ENCODE measurements at regions of chr1 and their contacts with region 1.

Region 1: GRCh38 chr1:165129568-165130164 is 226.8 kb downstream of the LMX1A start:
- DNase-seq: peak; percentile 81
- H3K4me3 Mint-ChIP-seq: no peak overlapping the region
- H3K27ac Mint-ChIP-seq: no peak overlapping the region
- H3K4me1 Mint-ChIP-seq: no peaks in the 10 kb centered on the region
- H3K27me3 Mint-ChIP-seq: peaks cover 68% of the 10 kb centered on the region
- CTCF ChIP-seq: peak; percentile 65

Region 2: GRCh38 chr1:165114022-165114888 is 15.4 kb before region 1 on chr1:
- CTCF ChIA-PET with region 1: interaction called, 10 read pairs
- intact Hi-C with region 1: no loop called
- DNase-seq: peak; percentile 70
- H3K4me3 Mint-ChIP-seq: no peak overlapping the region
- H3K27ac Mint-ChIP-seq: no peak overlapping the region
- H3K4me1 Mint-ChIP-seq: peaks cover 7% of the 10 kb centered on the region
- H3K27me3 Mint-ChIP-seq: peaks cover 63% of the 10 kb centered on the region
- CTCF ChIP-seq: peak; percentile 69

Region 3: DNA sequence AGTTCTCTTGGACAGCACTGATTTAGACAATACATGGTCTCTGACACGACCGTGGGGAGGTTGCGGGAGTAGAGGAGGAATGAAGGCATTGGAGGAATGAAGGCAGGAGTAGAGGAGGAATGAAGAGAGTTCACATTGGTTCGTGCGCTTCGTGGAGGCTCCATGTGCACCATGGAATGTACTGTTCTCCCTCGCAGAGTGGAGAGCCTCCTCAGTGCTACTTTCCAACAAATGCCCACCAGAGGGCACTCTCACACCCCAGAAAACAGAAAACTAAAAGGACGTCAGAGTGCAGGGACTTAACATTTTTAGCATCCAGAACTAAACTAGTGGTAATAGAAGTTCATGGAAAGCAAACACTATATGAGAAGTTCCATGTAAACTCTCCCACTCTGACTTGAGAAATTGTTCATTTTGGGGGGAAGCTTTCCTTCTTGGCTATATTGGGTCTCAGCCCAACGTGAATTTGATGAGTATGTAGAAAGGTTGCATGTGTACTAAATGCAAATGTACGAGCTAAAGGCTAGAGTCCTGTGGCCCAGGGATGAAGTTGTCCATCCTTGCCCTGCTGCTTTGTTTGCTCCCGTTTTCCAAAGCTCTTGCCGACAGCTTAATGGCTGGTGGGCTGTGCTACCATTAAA is 15.2 kb after region 1 on chr1:
- CTCF ChIA-PET with region 1: interaction called, 5 read pairs
- intact Hi-C with region 1: loop called (anchors 1 kb)
- DNase-seq: peak; percentile 73
- H3K4me3 Mint-ChIP-seq: no peak overlapping the region
- H3K27ac Mint-ChIP-seq: no peak overlapping the region
- H3K4me1 Mint-ChIP-seq: no peaks in the 10 kb centered on the region
- H3K27me3 Mint-ChIP-seq: peaks cover 37% of the 10 kb centered on the region
- CTCF ChIP-seq: peak; percentile 75

Region 4: DNA sequence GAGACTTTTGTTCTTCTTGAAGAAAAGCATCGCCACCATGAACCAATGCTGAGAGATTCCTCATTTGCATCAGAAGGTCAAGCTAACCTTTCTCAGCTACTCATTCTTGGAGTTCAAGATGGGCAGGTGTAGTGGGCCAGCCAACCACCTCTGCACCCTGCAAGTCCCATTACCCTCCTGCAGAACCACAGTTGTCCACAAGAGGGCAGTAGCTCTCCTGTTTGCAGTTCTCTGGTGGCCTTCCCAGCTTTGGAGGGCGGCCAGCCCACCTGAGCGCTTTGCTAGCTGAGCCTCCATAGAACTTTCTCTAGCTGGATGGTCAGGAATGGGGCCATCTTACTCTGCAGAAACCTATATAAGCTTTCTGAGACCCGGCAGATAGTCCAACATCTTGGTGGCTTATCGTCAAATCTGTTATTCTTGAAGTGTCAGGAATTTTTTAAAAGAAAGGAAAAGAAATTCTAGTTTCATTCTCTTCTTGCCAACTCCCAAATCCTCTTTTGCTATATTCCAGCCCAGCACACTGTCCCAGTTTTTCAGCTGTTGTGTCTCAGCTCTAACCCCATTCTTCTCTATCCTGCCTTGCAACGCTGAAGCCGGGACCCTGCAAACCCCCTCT is 237.8 kb after region 1 on chr1:
- CTCF ChIA-PET with region 1: interaction called, 6 read pairs
- intact Hi-C with region 1: loop called (anchors 1 kb)
- DNase-seq: peak; percentile 85
- H3K4me3 Mint-ChIP-seq: no peak overlapping the region
- H3K27ac Mint-ChIP-seq: no peak overlapping the region
- H3K4me1 Mint-ChIP-seq: no peaks in the 10 kb centered on the region
- H3K27me3 Mint-ChIP-seq: peaks cover 82% of the 10 kb centered on the region
- CTCF ChIP-seq: peak; percentile 91

Measured in Calu3 (cell line).